GM12878 (cell line): ENCODE measurements at regions of chr17 and their contacts with region 1.

Region 1: DNA sequence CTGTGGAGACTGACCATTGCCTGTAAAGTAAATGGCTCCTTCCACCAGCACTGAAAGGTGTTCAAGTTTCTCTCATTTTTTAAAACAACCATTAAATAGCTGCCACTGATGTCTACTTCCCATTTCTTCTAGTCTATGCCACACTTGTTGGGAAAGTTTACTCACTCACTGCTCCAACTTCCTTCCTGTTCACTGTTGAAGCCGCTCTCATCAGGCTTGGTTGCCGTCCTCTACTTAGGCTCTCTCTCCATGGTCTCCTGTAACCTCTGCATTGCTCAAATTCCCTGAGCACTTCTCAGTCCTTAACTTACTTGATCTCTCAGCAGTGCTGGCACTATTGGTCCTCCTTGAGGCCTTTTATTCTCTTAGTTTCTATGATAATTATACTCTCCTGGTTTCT is 32.4 kb downstream of the SNX11 start:
- DNase-seq: no peak
- ATAC-seq: no peak
- H3K4me3 ChIP-seq: no peak overlapping the region
- H3K27ac ChIP-seq: no peak overlapping the region
- H3K4me1 ChIP-seq: peaks cover 17% of the 10 kb centered on the region
- H3K27me3 ChIP-seq: no peaks in the 10 kb centered on the region
- CTCF ChIP-seq: no peak
- EP300 ChIP-seq: no peak
- POLR2A ChIP-seq: no peak
- RAD21 ChIP-seq: no peak

Region 2: GRCh38 chr17:47970704-47971463 is 169.1 kb before region 1 on chr17 and contains the start of gene CDK5RAP3:
- CTCF ChIA-PET with region 1: no interaction called
- POLR2A ChIA-PET with region 1: no interaction called
- RAD21 ChIA-PET with region 1: no interaction called
- SMC1A ChIA-PET with region 1: no interaction called
- in situ Hi-C with region 1: no loop called
- intact Hi-C with region 1: no loop called
- DNase-seq: peak; percentile 97
- ATAC-seq: peak; percentile 98
- H3K4me3 ChIP-seq: peak within 1 kb of the TSS; percentile 92
- H3K27ac ChIP-seq: peak within 1 kb of the TSS; percentile 83
- H3K4me1 ChIP-seq: peaks cover 15% of the 10 kb centered on the region
- H3K27me3 ChIP-seq: no peaks in the 10 kb centered on the region
- CTCF ChIP-seq: peak; percentile 97 to 100 (median 99); a peak in 5 of 6 replicates
- EP300 ChIP-seq: no peak
- POLR2A ChIP-seq: peak; percentile 97
- RAD21 ChIP-seq: peak; percentile 45
- polyA plus RNA-seq, gene CDK5RAP3: 69.4 to 160 TPM

Region 3: DNA sequence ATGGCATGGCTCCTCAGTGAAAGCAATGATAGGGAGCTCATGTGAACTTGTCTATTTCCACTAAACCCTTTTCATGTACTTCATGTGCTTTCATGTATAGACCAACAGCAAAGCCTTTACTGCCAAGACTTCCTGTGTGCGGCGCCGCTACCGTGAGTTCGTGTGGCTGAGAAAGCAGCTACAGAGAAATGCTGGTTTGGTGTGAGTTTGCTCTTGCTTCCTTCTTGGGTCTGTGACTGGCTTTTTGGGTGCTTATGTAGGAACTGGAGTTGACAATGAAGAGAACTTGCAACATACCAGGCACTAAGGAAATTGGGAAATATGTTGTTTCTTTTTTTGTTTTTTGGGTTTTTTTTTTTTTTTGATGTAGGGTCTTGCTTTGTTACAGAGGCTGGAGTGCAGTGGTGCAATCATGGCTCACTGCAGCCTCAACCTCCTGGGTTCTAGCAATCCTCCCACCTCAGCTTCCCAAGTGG is 26.7 kb before region 1 on chr17:
- CTCF ChIA-PET with region 1: interaction called, 12 read pairs
- POLR2A ChIA-PET with region 1: no interaction called
- RAD21 ChIA-PET with region 1: interaction called, 5 read pairs
- SMC1A ChIA-PET with region 1: interaction called, 8 read pairs
- in situ Hi-C with region 1: no loop called
- intact Hi-C with region 1: no loop called
- DNase-seq: peak; percentile 71
- ATAC-seq: peak; percentile 55
- H3K4me3 ChIP-seq: peak overlapping the region; percentile 97
- H3K27ac ChIP-seq: peak overlapping the region; percentile 93
- H3K4me1 ChIP-seq: no peaks in the 10 kb centered on the region; the same call in none of the 2 replicates
- H3K27me3 ChIP-seq: no peaks in the 10 kb centered on the region
- CTCF ChIP-seq: no peak
- EP300 ChIP-seq: no peak
- POLR2A ChIP-seq: peak; percentile 55; the same call in 1 of the 2 replicates
- RAD21 ChIP-seq: no peak